Motor neuron (in vitro differentiated cells): ENCODE measurements at regions of chr3 and their contacts with region 1.

Region 1: GRCh38 chr3:149480325-149481017 is 6.0 kb downstream of the TM4SF4 start:
- ATAC-seq: peak in 6 of 8 experiments; percentile 41 to 100 (median 93)
- H3K4me3 ChIP-seq: no peak overlapping the region
- H3K27ac ChIP-seq: no peak overlapping the region
- H3K4me1 ChIP-seq: no peaks in the 10 kb centered on the region

Region 2: GRCh38 chr3:148955544-148956346 is 524.7 kb before region 1 on chr3:
- in situ Hi-C with region 1: loop called in 1 of 9 experiments (anchors 25 kb)
- ATAC-seq: peak; percentile 41 to 85 (median 63)
- H3K4me3 ChIP-seq: no peak overlapping the region
- H3K27ac ChIP-seq: no peak overlapping the region
- H3K4me1 ChIP-seq: peaks cover 0 to 2% of the 10 kb centered on the region in 2 donors

Region 3: GRCh38 chr3:149352556-149352955 is 127.9 kb before region 1 on chr3:
- in situ Hi-C with region 1: loop called in 1 of 9 experiments (anchors 10 kb)
- ATAC-seq: peak in 4 of 8 experiments; percentile 50 to 94 (median 88)
- H3K4me3 ChIP-seq: no peak overlapping the region
- H3K27ac ChIP-seq: no peak overlapping the region
- H3K4me1 ChIP-seq: no peaks in the 10 kb centered on the region

Region 4: DNA sequence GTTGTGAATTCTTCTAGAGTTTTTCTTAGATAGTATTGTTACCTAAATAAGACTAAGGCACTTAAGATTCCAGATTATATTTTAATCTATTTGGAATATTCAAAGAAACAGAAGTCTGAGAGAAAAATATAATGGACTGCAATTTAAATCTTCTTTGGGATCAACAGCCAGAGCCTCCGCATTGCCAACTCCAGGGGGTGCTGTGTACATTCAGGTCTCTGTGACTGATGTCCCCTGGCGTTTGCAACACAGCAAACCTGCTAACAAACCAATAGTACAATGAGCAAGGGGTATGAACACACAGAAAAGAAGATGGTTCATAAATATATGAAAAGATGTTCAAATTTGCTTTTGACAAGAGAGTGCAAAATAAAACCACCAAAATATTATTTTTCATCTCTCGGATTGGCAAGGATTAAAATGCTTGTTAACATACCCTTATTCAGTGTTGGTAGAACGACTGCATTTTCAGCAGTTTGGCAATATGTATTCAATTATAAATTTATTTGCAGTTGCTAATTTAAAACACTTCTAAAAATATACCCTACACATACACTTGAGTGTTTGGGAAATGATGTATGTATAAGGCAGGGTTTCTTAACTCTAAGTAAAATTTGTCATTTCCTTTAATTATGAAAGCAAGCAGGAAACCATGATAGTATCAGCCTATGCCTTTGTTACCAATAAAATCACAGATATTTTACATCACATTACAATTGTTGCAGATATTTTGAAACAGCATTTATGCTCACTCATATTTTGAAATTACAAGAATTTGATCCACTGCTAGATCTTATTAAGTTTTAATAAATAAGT is 86.9 kb before region 1 on chr3:
- in situ Hi-C with region 1: loop called in 3 of 9 experiments (anchors 5 to 25 kb)
- ATAC-seq: peak in 6 of 8 experiments; percentile 46 to 95 (median 81)
- H3K4me3 ChIP-seq: no peak overlapping the region
- H3K27ac ChIP-seq: no peak overlapping the region
- H3K4me1 ChIP-seq: no peaks in the 10 kb centered on the region

Region 5: GRCh38 chr3:149783576-149783975 is 303.1 kb after region 1 on chr3:
- in situ Hi-C with region 1: no loop called
- ATAC-seq: peak in 3 of 8 experiments; percentile 33 to 64 (median 44)
- H3K4me3 ChIP-seq: no peak overlapping the region
- H3K27ac ChIP-seq: no peak overlapping the region
- H3K4me1 ChIP-seq: no peaks in the 10 kb centered on the region